ENCODE measurements at regions of chr1 and their contacts with region 1.

Region 1: DNA sequence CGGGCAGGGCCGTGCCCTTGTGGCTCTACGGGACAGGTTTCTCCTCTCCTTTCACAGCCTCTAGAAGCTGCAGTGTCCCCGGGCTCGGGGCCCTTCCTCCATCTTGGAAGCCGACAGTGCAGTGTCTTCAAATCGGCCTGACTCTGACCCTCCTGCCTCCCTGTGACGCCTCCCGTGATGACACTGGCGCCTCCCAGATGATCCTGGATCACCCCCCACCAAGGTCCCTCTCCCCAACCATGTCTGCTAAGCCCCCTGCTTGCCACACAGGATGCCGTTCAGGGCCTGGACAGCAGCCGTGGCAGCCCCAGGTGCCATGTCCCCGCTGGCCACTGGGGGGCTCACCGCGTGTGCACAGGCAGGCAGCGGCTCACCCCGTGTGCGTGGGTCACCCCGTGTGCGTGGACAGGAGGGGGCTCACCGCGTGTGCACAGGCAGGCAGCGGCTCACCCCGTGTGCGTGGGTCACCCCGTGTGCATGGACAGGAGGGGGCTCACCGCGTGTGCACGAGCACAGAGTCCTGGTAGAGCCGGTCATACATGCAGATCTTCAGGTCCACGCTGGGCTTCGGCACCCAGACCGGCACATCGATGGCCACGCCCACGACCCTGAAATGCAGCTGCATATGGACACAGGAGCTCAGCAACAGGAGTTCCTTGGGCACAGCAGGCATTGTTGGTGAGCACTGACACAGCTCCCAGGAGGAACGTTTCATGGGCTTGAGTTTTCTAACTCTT is 24.9 kb upstream of the TMEM52 start:
- DNase-seq: peak; percentile 69
- ATAC-seq: peak; percentile 82 to 88
- H3K4me3 ChIP-seq: peak overlapping the region; percentile 27
- H3K27ac ChIP-seq: no peak overlapping the region
- H3K4me1 ChIP-seq: peaks cover 16% of the 10 kb centered on the region
- H3K27me3 ChIP-seq: peaks cover 3% of the 10 kb centered on the region
- CTCF ChIP-seq: peak; percentile 96

Region 2: DNA sequence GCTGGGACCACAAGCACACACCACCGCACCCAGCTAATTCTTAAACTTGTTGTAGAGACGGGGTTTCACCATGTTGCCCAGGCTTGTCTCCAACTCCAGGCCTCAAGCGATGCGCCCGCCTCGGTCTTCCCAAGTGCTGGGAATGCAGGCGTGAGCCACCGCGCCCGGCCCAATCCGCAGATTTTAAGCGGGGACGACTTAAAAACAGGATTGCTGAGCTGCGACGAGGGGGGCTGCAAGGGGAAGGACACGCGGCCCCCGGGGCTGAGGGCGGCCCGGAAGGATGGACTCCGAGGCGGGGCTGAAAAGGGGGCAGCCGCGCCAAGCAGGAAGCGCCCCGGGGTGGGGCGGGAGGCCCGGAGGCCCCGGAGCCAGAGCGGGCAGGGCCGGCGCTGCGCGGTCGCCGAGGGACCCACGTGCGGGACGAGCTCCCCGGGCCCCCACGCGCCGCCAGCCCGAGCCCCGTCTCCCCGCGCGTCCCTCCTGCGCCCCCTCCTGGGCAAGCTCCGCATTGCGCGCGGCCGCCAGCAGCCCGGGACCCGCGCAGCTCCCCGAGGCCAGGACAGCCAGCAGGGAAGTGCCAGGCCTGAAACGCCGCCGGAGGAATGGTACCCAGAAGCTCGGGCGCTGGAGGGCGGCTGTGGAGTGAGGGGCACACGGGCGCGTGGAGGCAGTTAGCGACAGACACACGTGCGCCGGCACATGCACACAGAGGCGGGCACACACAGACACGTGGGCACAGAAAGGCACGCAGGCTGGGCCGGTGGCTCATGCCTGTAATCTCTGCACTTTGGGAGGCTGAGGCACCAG is 100.7 kb after region 1 on chr1:
- intact Hi-C with region 1: loop called (anchors 10 kb)
- DNase-seq: peak; percentile 79
- ATAC-seq: peak; percentile 70 to 75
- H3K4me3 ChIP-seq: peak overlapping the region; percentile 39
- H3K27ac ChIP-seq: no peak overlapping the region
- H3K4me1 ChIP-seq: peaks cover 41% of the 10 kb centered on the region
- H3K27me3 ChIP-seq: peaks cover 32% of the 10 kb centered on the region
- CTCF ChIP-seq: peak; percentile 81

Region 3: GRCh38 chr1:2174348-2175054 is 230.5 kb after region 1 on chr1:
- intact Hi-C with region 1: no loop called
- DNase-seq: no peak
- ATAC-seq: peak; percentile 47 to 63
- H3K4me3 ChIP-seq: peak overlapping the region; percentile 43
- H3K27ac ChIP-seq: no peak overlapping the region
- H3K4me1 ChIP-seq: no peaks in the 10 kb centered on the region
- H3K27me3 ChIP-seq: no peaks in the 10 kb centered on the region
- CTCF ChIP-seq: peak; percentile 85